Ovary (tissue), 10 donors: ENCODE measurements at regions of chr1 and their contacts with region 1.

Region 1: GRCh38 chr1:229046251-229046853 is 224.6 kb upstream of the RAB4A start:
- DNase-seq: no peak
- H3K4me3 ChIP-seq: no peak overlapping the region
- H3K27ac ChIP-seq: no peak overlapping the region
- H3K4me1 ChIP-seq: no peaks in the 10 kb centered on the region
- H3K27me3 ChIP-seq: no peaks in the 10 kb centered on the region
- CTCF ChIP-seq: no peak
- EP300 ChIP-seq: no peak
- POLR2A ChIP-seq: no peak

Region 2: DNA sequence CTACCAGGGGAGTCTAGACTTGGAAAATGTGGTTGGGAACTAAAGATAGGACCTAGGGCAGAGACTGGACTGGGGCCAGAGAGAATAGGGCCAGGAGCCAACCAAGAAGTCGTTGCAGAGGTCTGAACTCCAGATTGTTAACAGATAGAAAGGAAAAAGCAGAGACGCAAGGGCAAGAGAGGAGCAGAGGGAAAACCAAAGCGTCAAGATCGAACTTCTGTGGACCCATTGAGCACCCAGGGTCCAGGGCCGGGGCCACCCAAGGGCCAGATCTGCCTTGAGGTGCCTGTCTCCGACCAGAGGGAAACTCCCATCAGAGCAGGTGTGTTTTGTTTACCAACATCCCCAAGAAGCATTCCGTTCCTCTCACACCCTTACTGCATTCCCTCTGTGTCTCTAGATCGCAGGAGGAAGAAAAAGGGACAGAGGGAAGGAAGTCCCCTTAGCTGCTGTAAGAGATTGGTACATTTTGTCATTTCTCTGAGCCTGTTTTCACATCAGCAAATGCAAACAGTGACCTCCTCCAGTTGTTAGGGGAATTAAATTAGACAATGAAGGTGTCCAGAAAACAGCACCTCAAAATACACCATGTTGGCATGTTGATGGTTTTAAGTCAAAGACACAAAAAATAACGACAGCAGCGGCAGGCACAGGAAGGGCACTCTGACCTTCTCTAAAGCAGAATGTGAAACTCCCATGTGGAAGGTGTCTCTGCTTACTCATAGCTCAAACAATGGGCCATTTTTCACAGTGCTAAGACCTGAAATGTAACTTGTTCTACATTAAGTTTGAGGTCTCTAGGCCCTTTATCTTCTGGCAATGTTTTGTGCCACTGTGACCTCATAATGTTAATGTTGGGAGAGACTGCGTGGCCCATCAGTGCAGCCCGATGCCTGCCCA is 118.7 kb after region 1 on chr1:
- intact Hi-C with region 1: loop called in 1 of 4 experiments (anchors 5 kb)
- DNase-seq: no peak
- H3K4me3 ChIP-seq: no peak overlapping the region
- H3K27ac ChIP-seq: no peak overlapping the region
- H3K4me1 ChIP-seq: peaks cover 4% of the 10 kb centered on the region
- H3K27me3 ChIP-seq: no peaks in the 10 kb centered on the region
- CTCF ChIP-seq: no peak
- EP300 ChIP-seq: no peak
- POLR2A ChIP-seq: no peak